ENCODE measurements at regions of chr1 and their contacts with region 1.

Region 1: DNA sequence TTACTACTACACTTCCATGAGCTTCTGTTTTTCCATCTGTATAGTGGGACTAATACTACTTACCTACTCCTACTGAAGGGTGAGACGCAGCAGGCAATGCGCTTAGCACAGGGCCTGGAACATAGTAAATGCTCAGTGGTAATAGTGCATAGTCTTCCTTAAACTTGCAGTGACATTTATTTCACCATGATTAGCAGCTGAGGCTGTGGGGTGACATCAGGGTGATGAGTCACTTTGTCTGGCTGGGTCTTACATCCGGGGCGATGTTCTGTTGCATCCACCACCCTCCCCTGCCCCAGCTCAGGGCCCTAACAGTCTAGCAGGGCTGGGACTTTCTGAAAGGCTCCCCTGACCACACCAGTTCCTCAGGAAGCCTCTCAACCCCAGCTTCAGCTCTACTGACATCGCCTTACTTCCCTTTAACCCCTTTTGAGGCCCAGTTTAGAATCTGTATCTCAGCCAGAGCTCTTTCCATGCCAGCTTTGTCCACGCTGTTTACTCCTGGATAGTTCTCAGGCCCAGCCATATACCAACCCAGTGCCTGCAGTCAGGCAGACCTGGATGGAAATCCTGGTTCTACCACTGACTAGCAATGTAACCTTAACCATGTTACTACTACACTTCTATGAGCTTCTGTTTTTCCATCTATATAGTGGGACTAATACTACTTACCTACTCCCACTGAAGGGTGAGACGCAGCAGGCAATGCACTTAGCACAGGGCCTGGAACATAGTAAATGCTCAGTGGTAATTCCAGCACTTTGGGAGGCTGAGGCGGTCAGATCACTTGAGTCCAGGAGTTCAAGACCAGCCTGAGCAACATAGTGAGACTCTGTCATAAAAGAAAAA is 66.3 kb downstream of the CD58 start:
- DNase-seq: peak; percentile 74 to 94 (median 83)
- H3K4me3 ChIP-seq: peak overlapping the region; percentile 25
- H3K4me3 Mint-ChIP-seq: peak overlapping the region; percentile 14 to 82 (median 68)
- H3K27ac ChIP-seq: peak overlapping the region; percentile 74
- H3K27ac Mint-ChIP-seq: peak overlapping the region; percentile 93 to 99 (median 98)
- H3K4me1 ChIP-seq: peaks cover 59% of the 10 kb centered on the region
- H3K4me1 Mint-ChIP-seq: peaks cover 52 to 78% (median 59%) of the 10 kb centered on the region in 3 donors
- H3K27me3 ChIP-seq: no peaks in the 10 kb centered on the region
- H3K27me3 Mint-ChIP-seq: no peaks in the 10 kb centered on the region

Region 2: DNA sequence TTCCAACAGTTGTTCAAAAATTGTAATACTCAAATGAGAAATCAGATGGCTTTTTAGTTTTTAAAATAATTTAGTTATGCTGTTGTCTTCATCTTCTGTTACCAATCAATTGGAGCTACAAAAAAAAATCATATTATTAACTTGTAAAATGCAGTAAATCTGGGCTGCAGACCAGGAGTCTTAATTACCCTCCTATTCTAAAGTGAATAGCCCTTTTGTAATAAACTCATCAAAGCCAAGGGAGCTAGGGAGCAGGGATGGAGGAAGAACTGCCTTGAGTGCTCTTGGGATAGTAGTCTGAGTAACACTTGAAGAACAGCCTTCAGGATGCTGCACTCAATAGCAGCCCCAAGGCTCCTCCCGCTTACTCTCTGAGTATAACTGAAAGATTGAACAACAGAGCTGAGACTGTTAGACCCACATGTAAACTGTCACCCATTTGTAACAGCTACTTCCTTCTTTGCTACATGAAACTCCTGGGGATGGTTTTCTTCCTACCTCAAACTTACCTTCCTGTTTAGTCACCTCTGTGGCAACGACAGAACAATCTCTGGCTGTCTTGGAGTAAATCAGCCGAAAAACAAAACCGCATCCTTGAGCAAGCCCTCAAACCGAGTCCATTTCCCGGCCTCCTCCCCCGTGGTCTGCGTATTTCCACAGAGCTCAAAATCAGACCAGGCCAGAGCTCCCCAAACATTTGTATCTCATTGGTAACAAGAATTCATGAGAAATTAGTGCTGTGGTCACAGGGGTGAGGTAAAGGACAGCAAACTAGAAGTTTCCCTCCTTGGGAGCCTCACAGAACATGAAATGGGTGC is 10.4 kb after region 1 on chr1:
- CTCF ChIA-PET with region 1: interaction called, 15 read pairs
- POLR2A ChIA-PET with region 1: interaction called, 20 read pairs
- DNase-seq: peak; percentile 37 to 77 (median 59)
- H3K4me3 ChIP-seq: peak overlapping the region; percentile 10
- H3K4me3 Mint-ChIP-seq: peak overlapping the region; percentile 37 to 91 (median 75)
- H3K27ac ChIP-seq: peak overlapping the region; percentile 77
- H3K27ac Mint-ChIP-seq: peak overlapping the region; percentile 91 to 100 (median 99)
- H3K4me1 ChIP-seq: peaks cover 35% of the 10 kb centered on the region
- H3K4me1 Mint-ChIP-seq: peaks cover 57 to 75% (median 74%) of the 10 kb centered on the region in 3 donors
- H3K27me3 ChIP-seq: no peaks in the 10 kb centered on the region
- H3K27me3 Mint-ChIP-seq: no peaks in the 10 kb centered on the region

Region 3: DNA sequence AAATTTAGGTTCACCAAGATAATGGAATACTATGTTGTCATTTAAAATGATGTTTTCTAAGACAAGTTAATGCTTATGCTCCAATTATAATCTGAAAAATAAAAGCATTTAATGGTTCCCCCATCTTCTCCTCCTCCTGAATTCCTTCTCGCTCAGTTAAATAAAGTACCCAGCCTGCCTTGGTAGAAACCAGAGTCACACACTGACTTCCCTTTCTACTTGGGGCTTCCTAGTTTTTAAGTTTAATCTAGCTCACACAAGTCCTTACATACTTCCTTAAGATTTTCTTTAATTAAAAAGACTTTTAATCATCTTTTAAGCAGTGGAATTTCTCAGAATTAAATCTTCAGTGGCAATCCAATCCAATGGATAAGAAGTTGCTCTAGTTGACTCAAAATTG is 33.4 kb after region 1 on chr1:
- CTCF ChIA-PET with region 1: interaction called, 3 read pairs
- POLR2A ChIA-PET with region 1: interaction called, 10 read pairs
- DNase-seq: no peak
- H3K4me3 ChIP-seq: no peak overlapping the region
- H3K4me3 Mint-ChIP-seq: no peak overlapping the region
- H3K27ac ChIP-seq: no peak overlapping the region
- H3K27ac Mint-ChIP-seq: peak overlapping the region in 6 of 8 donors; percentile 1 to 83 (median 42)
- H3K4me1 ChIP-seq: peaks cover 10% of the 10 kb centered on the region
- H3K4me1 Mint-ChIP-seq: peaks cover 32 to 58% (median 55%) of the 10 kb centered on the region in 3 donors
- H3K27me3 ChIP-seq: no peaks in the 10 kb centered on the region
- H3K27me3 Mint-ChIP-seq: no peaks in the 10 kb centered on the region

Region 4: DNA sequence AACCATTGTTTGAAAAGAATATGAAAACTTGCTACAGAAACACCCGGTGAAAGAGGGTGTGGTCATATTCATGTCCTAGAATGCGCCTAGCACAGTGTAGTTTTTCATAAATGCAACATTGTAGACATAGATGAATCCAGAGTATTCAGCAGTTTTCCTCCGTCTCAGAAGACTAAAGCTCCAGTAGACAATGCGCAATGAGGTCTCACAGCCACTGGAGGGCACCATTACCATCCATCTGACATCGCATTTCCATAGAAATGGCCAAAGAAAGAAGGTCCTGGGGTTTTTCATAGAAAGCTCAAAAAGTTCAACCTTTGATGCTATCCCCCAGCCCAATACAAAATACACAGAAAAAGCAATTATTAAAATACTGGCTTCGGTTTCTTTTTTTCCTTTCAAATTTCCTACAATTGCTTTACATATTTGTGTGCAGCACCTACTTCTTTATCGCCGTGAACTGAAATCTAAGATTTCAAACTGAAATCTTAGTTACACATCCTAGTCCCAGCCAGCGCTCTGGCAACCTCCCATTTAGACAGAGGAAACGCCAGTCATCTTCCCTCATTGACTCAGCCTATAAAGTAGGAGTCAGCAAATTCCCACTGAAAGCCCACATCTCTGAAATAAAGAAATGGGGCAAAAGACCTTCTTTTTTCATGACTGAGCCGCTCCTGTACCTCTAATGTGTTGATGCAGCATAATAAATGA is 70.2 kb after region 1 on chr1:
- CTCF ChIA-PET with region 1: interaction called, 9 read pairs
- POLR2A ChIA-PET with region 1: interaction called, 12 read pairs
- DNase-seq: peak; percentile 16 to 61 (median 36)
- H3K4me3 ChIP-seq: no peak overlapping the region
- H3K4me3 Mint-ChIP-seq: peak overlapping the region in 1 of 7 donors; percentile 80
- H3K27ac ChIP-seq: no peak overlapping the region
- H3K27ac Mint-ChIP-seq: peak overlapping the region in 1 of 8 donors; percentile 29
- H3K4me1 ChIP-seq: peaks cover 9% of the 10 kb centered on the region
- H3K4me1 Mint-ChIP-seq: peaks cover 11 to 23% (median 21%) of the 10 kb centered on the region in 3 donors
- H3K27me3 ChIP-seq: no peaks in the 10 kb centered on the region
- H3K27me3 Mint-ChIP-seq: peaks cover 0 to 12% of the 10 kb centered on the region in 2 donors

Region 5: GRCh38 chr1:116817582-116818064 is 313.1 kb after region 1 on chr1:
- CTCF ChIA-PET with region 1: no interaction called
- POLR2A ChIA-PET with region 1: no interaction called
- DNase-seq: peak; percentile 63 to 84 (median 69)
- H3K4me3 ChIP-seq: no peak overlapping the region
- H3K4me3 Mint-ChIP-seq: peak overlapping the region; percentile 47 to 78 (median 71)
- H3K27ac ChIP-seq: no peak overlapping the region
- H3K27ac Mint-ChIP-seq: peak overlapping the region; percentile 72 to 95 (median 88)
- H3K4me1 ChIP-seq: peaks cover 30% of the 10 kb centered on the region
- H3K4me1 Mint-ChIP-seq: peaks cover 38 to 53% (median 45%) of the 10 kb centered on the region in 3 donors
- H3K27me3 ChIP-seq: no peaks in the 10 kb centered on the region
- H3K27me3 Mint-ChIP-seq: no peaks in the 10 kb centered on the region

Measured in CD8-positive, alpha-beta memory T cell (primary cell).